ENCODE measurements at regions of chr12 and their contacts with region 1.

Region 1: DNA sequence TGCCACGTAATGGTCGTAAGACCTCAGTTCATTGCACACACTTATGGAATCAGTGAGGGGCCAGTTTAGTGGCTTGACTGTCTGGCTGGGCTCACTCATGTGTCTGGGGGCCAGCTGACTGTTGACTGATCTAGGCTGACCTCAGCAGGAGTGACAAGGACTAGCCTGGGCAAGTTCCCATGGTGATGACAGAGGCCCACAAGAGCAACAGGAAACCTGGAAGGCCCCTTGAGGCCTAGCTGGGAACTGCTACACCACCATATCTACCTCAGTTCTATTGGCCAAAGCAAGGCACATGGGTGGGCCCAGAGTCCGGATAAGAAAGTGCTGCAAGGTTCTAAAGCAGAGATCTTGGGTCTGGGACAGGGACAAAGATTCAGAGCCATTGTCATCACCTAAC is 21.3 kb upstream of the RFLNA start:
- DNase-seq: no peak
- ATAC-seq: peak in 2 of 4 donors; percentile 53 to 70
- H3K4me3 ChIP-seq: no peak overlapping the region
- H3K27ac ChIP-seq: no peak overlapping the region
- H3K4me1 ChIP-seq: no peaks in the 10 kb centered on the region
- H3K27me3 ChIP-seq: no peaks in the 10 kb centered on the region
- CTCF ChIP-seq: no peak

Region 2: DNA sequence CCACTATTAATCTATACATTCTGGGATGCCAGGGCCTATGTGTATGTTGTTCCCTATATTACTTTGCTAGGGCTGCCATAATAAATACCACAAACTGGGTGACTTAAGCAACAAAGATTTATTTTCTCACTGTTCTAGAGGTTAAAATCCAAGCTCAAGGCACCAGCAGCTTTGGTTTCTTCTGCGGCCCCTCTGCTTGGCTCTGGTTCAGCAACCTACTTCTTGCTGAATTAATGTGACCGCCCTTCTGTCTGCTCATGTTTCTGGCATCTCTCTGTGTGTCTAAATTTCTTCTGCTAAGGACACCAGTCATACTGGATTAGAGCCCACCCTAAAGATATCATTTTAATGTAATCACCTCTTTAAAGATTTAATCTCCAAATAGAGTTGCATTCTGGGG is 215.9 kb before region 1 on chr12:
- intact Hi-C with region 1: no loop called
- DNase-seq: no peak
- ATAC-seq: no peak
- H3K4me3 ChIP-seq: no peak overlapping the region
- H3K27ac ChIP-seq: no peak overlapping the region
- H3K4me1 ChIP-seq: no peaks in the 10 kb centered on the region
- H3K27me3 ChIP-seq: no peaks in the 10 kb centered on the region
- CTCF ChIP-seq: no peak

Region 3: DNA sequence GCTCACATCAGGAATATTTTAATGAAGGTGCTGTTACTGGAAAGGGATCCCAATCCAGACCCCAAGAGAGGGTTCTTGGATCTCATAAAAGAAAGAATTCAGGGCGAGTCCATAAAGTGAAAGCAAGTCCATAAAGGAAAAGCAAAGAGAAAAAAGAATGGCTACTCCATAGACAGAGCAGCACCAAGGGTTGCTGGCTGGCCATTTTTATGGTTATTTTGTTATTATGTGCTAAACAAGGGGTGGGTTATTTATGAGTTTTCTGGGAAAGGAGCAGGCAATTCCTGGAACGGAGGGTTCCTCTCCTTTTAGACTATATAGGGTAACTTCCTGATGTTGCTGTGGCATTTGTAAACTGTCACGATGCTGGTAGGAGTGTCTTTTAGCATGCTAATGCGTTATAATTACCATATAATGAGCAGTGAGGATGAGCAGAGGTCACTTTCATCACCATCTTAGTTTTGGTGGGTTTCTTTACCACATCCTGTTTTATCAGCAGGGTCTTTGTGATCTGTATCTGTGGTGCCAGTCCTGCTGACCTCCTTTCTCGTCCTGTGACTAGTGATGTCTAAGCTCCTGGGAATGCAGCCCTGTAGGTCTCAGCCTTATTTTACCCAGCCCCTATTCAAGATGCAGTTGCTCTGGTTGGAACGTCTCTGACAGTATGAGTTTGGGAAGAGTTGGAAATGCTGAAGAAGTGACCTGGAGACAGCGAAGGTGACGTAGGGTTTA is 200.2 kb before region 1 on chr12:
- intact Hi-C with region 1: loop called in 1 of 3 experiments (anchors 10 kb)
- DNase-seq: no peak
- ATAC-seq: no peak
- H3K4me3 ChIP-seq: no peak overlapping the region
- H3K27ac ChIP-seq: no peak overlapping the region
- H3K4me1 ChIP-seq: no peaks in the 10 kb centered on the region
- H3K27me3 ChIP-seq: no peaks in the 10 kb centered on the region
- CTCF ChIP-seq: no peak

Region 4: DNA sequence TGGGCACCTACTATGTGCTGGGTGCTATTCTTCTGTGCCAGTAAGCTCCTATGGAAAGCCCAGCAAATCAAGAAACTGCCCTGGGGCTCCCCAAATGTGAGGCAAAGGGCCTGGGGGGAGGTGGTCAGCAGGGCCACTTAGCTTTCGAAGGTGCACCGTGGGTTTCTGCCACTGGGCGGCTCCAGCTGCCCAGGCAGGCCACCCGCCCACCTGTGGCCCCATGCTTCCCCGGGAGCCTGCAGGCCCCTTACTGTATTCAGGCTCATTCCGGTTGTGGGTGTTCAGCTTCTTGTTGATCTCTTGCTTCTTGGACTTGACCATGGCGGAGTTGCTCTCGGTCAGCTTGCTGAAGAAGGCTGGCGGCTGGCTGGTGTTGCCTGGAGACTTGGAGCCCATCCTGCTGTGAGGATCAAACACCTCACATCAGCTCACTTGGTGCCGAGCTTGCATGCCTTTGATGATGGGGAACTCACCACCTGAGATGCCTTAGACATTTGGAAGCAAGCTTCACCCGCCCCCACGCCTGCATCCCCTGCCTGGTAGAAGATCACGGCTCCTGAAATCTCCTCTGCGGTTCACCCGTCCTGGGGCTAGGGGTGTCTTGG is 58.5 kb after region 1 on chr12:
- intact Hi-C with region 1: no loop called
- DNase-seq: peak in 2 of 6 donors; percentile 21 to 53
- ATAC-seq: peak in 1 of 4 donors; percentile 4
- H3K4me3 ChIP-seq: no peak overlapping the region
- H3K27ac ChIP-seq: no peak overlapping the region
- H3K4me1 ChIP-seq: no peaks in the 10 kb centered on the region
- H3K27me3 ChIP-seq: no peaks in the 10 kb centered on the region
- CTCF ChIP-seq: no peak

Measured in pancreas (tissue), 10 donors.